MCF 10A (cell line): ENCODE measurements at regions of chr2 and their contacts with region 1.

Region 1: DNA sequence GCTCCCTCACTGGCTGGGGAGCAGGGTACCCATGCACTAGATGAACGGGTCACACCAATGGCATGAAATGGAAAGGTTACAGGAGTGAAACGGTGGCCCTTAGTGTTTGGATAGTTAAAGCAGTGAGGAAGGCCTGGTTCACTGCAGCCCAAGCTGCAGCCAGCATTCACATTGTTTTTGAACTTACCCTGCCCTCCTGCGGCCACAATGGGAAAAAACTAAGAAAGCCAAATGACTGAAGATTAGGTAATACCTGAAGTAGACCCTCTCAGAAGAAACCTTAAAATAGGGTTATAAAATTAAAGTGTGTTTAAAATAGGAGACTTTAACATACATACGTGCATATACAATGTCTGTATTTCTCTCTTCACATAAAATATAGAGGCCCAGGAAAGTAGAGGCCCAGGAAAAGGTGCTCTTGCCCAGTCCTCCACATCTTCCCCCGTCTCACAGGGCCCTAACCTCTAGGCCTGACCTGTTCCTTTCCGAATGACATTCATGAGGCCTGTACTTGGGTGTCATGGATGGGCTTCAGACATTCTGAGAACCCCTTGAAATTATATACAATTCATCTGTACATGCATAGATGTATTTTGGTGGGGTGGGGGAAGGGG is 33.3 kb downstream of the DOK1 start:
- DNase-seq: peak; percentile 78
- H3K4me3 Mint-ChIP-seq: no peak overlapping the region
- H3K27ac Mint-ChIP-seq: no peak overlapping the region
- H3K4me1 Mint-ChIP-seq: peaks cover 8% of the 10 kb centered on the region
- H3K27me3 Mint-ChIP-seq: peaks cover 4% of the 10 kb centered on the region
- CTCF ChIP-seq: peak; percentile 71

Region 2: GRCh38 chr2:74345272-74345943 is 242.4 kb before region 1 on chr2:
- CTCF ChIA-PET with region 1: no interaction called
- POLR2A ChIA-PET with region 1: no interaction called
- intact Hi-C with region 1: no loop called
- DNase-seq: no peak
- H3K4me3 Mint-ChIP-seq: no peak overlapping the region
- H3K27ac Mint-ChIP-seq: no peak overlapping the region
- H3K4me1 Mint-ChIP-seq: no peaks in the 10 kb centered on the region
- H3K27me3 Mint-ChIP-seq: peaks cover 3% of the 10 kb centered on the region
- CTCF ChIP-seq: no peak

Region 3: DNA sequence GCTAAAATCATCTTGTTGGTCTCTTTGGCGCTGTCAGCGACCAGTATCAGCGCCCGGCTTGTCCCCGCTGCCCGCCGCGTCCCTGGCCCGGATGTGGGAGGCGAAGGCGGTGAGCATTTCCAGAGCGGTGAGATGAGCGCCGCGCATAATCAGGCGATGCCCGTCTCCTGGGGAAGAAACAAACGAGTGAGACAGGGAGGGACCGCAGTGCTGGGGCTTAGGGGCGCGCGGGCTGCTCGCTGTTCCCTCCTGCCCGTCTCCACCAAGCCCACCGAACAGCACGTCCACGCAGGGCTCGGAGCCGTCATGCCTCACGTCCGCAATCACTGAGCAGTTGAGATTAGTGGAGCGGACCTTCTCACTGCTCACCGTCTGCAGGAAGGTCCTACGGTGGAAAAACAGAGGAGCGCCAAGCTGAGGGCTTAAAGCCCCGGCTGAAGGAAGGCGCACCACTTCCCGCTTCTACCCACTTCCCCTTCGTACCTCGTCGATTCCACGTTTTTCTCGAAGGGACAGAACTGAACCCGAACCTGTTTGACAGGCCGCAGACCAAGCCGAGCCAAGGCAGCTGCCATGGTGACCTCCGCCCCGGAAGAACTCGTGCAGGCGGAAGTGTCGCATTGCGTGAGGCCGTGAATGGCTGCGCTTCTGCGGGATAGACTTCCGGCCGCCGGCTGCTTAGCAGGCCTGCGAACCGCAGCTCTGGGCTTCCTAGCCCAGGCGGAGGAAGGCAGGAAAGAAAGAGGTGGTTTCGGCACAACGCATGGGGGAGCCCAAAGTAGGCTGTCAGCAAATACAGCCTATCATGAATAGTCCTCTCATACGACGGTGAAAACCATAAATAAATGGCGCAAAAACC is 115.5 kb before region 1 on chr2 and contains the start of gene MRPL53:
- CTCF ChIA-PET with region 1: interaction called, 15 read pairs
- POLR2A ChIA-PET with region 1: interaction called, 11 read pairs
- intact Hi-C with region 1: no loop called
- DNase-seq: peak; percentile 91
- H3K4me3 Mint-ChIP-seq: peak within 1 kb of the TSS; percentile 94
- H3K27ac Mint-ChIP-seq: peak within 1 kb of the TSS; percentile 97
- H3K4me1 Mint-ChIP-seq: peaks cover 8% of the 10 kb centered on the region
- H3K27me3 Mint-ChIP-seq: no peaks in the 10 kb centered on the region
- CTCF ChIP-seq: no peak
- total RNA-seq, gene MRPL53: 115 and 123 TPM in 2 replicates

Region 4: DNA sequence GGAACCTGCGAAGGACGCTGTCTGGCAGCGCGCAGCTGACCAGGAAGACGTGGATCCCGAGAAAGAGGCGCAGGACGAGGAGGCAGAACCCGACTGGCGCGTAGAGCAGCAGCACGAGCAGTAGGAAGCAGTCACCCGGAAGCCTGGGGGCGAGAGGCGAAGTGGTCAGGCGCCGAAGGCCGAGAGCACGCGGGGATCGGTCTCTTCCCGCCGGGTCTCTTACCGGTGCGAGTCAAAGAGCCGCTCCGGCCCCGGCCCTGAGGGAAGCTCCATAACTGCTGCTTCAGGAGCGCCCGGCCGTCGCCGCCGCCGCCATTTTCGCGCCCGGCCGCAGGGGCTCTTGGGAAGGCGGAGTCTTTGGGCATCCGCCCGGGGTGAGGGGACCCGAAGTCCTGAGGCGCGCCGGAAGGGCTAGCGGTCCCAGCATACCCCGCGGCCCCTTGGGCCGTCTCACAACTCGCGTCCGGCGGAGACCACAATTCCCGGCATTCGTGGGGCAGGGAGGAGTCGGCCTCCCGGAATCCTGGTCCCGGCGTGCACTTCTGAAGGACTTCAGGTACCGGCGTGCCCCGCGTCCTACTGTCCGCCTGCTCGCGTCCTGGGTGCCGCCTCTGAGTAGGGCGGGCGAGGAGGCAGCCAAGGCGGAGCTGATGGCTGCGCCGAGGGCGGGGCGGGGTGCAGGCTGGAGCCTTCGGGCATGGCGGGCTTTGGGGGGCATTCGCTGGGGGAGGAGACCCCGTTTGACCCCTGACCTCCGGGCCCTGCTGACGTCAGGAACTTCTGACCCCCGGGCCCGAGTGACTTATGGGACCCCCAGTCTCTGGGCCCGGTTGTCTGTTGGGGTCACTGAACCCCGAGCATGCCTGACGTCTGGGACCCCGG is 58.2 kb before region 1 on chr2 and contains the starts of genes AUP1 and HTRA2:
- CTCF ChIA-PET with region 1: interaction called, 71 read pairs
- POLR2A ChIA-PET with region 1: interaction called, 34 read pairs
- intact Hi-C with region 1: loop called (anchors 1 kb)
- DNase-seq: peak; percentile 99
- H3K4me3 Mint-ChIP-seq: peak within 1 kb of the TSS; percentile 94
- H3K27ac Mint-ChIP-seq: peak within 1 kb of the TSS; percentile 91
- H3K4me1 Mint-ChIP-seq: peaks cover 38% of the 10 kb centered on the region
- H3K27me3 Mint-ChIP-seq: no peaks in the 10 kb centered on the region
- CTCF ChIP-seq: no peak
- total RNA-seq, gene AUP1: 138 and 140 TPM in 2 replicates
- total RNA-seq, gene HTRA2: 27.6 and 33.0 TPM in 2 replicates

Region 5: DNA sequence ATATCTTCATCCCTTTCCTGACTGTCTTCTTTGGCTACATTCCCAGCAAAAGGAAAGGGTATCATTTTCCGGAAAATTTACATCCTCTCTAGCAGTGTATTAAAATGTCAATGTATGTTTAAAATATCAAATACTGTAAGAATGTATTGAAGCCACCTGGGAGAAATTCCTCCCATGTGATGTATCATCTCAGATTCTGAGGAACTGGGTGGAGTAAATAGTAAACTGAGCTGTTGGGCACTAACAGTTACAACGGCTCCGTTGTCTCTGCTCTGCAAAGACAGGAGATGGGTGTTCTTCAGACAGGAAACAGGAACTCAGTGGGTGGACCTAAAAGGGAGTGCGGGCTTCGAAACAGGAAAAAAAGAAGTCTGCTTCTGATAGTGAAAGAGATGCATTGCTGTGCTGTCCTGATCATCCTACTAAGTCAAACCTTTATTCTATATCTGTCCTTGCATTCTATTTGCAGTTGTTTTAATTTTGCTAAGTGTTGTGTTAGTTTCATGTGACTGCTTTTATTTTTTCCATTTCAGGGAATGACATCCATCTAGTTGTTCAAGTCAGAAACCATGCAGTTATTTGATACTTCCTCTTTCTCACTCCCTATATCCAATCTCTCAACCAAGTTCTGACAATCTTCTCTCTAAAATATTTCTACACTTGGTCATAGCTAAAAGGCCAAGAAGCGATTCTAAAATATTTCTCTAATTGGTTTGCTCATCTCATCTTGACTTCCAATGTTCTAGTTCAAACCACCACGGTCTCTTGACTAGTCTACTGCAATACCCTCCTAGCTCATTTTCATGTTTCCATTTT is 13.8 kb before region 1 on chr2:
- CTCF ChIA-PET with region 1: interaction called, 203 read pairs
- POLR2A ChIA-PET with region 1: interaction called, 6 read pairs
- intact Hi-C with region 1: no loop called
- DNase-seq: peak; percentile 71
- H3K4me3 Mint-ChIP-seq: peak overlapping the region; percentile 48
- H3K27ac Mint-ChIP-seq: peak overlapping the region; percentile 71
- H3K4me1 Mint-ChIP-seq: peaks cover 18% of the 10 kb centered on the region
- H3K27me3 Mint-ChIP-seq: no peaks in the 10 kb centered on the region
- CTCF ChIP-seq: no peak